ENCODE measurements at regions of chr4 and their contacts with region 1.

Region 1: DNA sequence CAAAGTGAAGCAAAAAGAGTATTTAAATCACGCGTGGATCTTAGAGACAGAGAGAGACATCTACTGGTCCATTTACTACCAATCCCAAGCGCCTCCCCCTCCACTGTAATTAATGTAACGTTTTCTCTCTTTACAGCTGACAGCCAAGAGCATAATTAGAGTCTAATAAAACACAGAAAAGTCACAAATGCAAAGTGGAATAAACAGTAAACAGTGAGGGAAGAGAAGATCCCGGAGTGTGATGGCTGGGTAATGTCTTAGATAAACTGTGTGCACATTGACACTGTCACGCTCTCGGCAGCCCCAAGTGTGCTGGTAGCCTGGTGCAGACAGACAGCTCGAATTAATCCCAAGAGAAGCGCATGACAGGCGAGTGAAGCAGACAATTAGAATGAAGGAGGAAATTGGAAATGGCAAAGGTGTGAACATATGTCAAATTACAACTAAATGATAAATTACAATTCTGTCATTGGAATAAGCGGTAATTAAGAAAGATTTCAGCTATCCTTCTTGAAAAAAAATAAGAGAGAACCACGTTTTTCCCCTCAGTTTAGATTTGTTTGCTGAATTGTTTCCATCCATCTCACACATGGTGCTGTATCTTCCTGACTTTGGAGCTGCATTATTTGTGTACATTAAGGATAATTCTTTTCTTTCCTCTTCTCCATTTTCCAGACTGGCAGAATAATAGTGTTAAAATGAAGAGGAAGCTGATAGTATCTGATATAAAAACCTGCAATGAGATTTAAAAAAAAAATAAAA is 100.1 kb downstream of the CXXC4 start:
- DNase-seq: peak; percentile 10
- H3K4me3 ChIP-seq: peak overlapping the region in 1 of 2 experiments; percentile 24; a peak in 2 of 4 replicates
- H3K27ac ChIP-seq: peak overlapping the region in 1 of 2 experiments; percentile 47; a peak in 2 of 4 replicates
- H3K4me1 ChIP-seq: peaks cover 4 to 5% of the 10 kb centered on the region in 2 experiments; a peak in 3 of 4 replicates
- H3K27me3 ChIP-seq: no peaks in the 10 kb centered on the region
- CTCF ChIP-seq: no peak
- EP300 ChIP-seq: no peak; a peak in 1 of 4 replicates
- RAD21 ChIP-seq: peak; percentile 32

Region 2: GRCh38 chr4:104451573-104451972 is 57.0 kb after region 1 on chr4:
- CTCF ChIA-PET with region 1: interaction called, 12 read pairs
- POLR2A ChIA-PET with region 1: no interaction called
- DNase-seq: peak; percentile 1
- H3K4me3 ChIP-seq: no peak overlapping the region
- H3K27ac ChIP-seq: no peak overlapping the region
- H3K4me1 ChIP-seq: peaks cover 0 to 3% of the 10 kb centered on the region in 2 experiments; a peak in 2 of 4 replicates
- H3K27me3 ChIP-seq: no peaks in the 10 kb centered on the region
- CTCF ChIP-seq: peak; percentile 41
- EP300 ChIP-seq: no peak
- RAD21 ChIP-seq: peak; percentile 68

Region 3: GRCh38 chr4:104494822-104495559 is 100.4 kb after region 1 on chr4 and contains the start of gene CXXC4:
- CTCF ChIA-PET with region 1: no interaction called
- POLR2A ChIA-PET with region 1: no interaction called
- DNase-seq: peak; percentile 77
- H3K4me3 ChIP-seq: peak within 1 kb of the TSS; percentile 44 to 68
- H3K27ac ChIP-seq: peak within 1 kb of the TSS in 1 of 2 experiments; percentile 62; a peak in 2 of 4 replicates
- H3K4me1 ChIP-seq: peaks cover 0 to 10% of the 10 kb centered on the region in 2 experiments; a peak in 2 of 4 replicates
- H3K27me3 ChIP-seq: peaks cover 17% of the 10 kb centered on the region; the same call in 1 of the 2 replicates
- CTCF ChIP-seq: no peak
- EP300 ChIP-seq: no peak
- RAD21 ChIP-seq: no peak
- polyA plus RNA-seq, gene CXXC4: 0.02 and 0.06 TPM in 2 replicates

Measured in SK-N-SH (cell line).